Activated T-helper 1 cell treated with anti-CD3 and anti-CD28 coated beads, Interleukin-12 subunit alpha, Interleukin-12 subunit beta, Interleukin-2, Interleukin-4 antibody, amounts not matched to agents 30 ng/mL and 10 ng/mL and 1 ng/mL, durations not matched to agents 14 hours and 24 hours and 36 hours (primary cell): ENCODE measurements at regions of chr7 and their contacts with region 1.

Region 1: DNA sequence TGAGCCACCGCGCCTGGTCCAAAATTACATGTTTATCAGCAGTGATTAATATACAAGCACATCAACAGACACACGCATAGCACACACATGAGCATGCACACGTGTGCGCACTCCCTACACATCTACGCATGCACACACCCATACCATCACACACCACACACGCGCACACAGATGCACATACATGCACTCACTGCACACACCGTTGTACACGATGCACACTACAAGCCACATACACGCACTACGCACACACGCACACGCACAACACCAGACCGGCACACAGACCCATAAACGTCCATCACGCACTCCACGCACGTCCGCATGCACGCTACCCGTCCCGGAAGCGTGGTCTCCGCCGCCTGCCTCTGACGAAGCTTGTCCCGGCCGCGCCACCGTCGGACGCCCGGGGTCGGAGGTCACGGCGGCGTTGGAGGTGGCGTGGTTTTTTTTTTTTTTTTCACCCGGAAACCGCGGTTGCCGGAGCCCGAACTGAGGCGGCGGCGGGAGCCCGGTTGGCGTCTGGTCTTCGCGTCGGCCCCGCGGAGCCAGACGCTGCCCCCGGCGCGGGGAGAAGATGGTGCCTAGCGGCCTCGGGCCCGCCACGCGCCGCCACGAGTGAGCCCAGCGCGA is at the start of gene TMEM248:
- DNase-seq: peak; percentile 90
- H3K4me3 Mint-ChIP-seq: peak within 1 kb of the TSS; percentile 98
- H3K27ac Mint-ChIP-seq: peak within 1 kb of the TSS; percentile 98
- H3K4me1 Mint-ChIP-seq: peaks cover 21% of the 10 kb centered on the region
- H3K27me3 Mint-ChIP-seq: no peaks in the 10 kb centered on the region
- total RNA-seq, gene TMEM248: 83.6 and 95.6 TPM in 2 replicates

Region 2: DNA sequence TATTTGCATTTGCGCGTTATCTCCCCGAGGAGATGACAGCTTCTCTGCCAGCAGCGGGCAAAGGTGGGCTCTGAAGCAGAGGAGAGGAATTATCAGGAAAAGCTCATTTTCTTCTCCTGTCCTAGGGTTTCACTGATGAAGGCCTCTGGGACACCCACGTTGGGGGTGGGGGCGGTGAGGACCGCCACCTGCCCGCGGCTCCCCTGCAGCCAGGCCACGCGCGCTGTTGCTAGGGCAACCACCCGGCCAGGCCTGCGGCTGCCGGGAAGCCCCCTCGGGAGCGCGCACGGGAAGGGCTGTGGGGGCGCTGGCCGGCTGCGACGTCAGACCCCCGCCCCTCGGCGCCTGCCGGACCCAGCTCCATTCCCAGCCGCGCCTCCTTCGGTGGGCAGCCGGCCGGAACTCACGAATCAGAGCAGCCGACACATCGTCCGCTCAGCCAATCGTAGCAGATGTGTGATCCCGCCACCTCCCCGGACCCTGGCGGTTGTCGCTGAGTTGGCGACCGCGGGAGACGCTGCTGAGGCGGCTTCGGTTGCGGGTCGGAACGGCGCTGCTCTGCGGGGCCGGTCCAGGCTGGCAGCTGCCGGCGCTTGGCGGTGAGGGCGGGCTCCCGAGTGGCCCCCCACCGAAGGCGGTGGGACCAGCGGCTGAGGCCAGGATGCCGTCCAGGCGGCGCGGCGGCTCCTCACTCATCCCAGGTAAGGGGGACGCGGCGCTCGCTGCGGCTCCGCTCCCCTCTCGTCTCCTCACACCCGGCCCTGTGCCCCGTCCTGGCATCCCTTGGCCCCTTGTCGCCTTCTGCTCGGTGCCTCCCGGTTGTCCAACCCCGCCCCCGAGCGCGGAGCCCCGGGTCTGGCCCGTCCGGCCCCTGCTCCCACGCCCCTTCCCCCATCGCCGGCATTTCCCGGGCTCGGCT is 715.8 kb before region 1 on chr7 and contains the start of gene TPST1:
- intact Hi-C with region 1: loop called (anchors 10 kb)
- DNase-seq: peak; percentile 77
- H3K4me3 Mint-ChIP-seq: peak within 1 kb of the TSS; percentile 92
- H3K27ac Mint-ChIP-seq: peak within 1 kb of the TSS; percentile 49
- H3K4me1 Mint-ChIP-seq: peaks cover 29% of the 10 kb centered on the region
- H3K27me3 Mint-ChIP-seq: peaks cover 36% of the 10 kb centered on the region
- total RNA-seq, gene TPST1: 1.6 and 1.8 TPM in 2 replicates

Region 3: GRCh38 chr7:66654123-66654732 is 266.7 kb before region 1 on chr7:
- intact Hi-C with region 1: loop called (anchors 1 kb)
- DNase-seq: peak; percentile 98
- H3K4me3 Mint-ChIP-seq: peak overlapping the region; percentile 94
- H3K27ac Mint-ChIP-seq: peak overlapping the region; percentile 94
- H3K4me1 Mint-ChIP-seq: peaks cover 15% of the 10 kb centered on the region
- H3K27me3 Mint-ChIP-seq: no peaks in the 10 kb centered on the region

Region 4: DNA sequence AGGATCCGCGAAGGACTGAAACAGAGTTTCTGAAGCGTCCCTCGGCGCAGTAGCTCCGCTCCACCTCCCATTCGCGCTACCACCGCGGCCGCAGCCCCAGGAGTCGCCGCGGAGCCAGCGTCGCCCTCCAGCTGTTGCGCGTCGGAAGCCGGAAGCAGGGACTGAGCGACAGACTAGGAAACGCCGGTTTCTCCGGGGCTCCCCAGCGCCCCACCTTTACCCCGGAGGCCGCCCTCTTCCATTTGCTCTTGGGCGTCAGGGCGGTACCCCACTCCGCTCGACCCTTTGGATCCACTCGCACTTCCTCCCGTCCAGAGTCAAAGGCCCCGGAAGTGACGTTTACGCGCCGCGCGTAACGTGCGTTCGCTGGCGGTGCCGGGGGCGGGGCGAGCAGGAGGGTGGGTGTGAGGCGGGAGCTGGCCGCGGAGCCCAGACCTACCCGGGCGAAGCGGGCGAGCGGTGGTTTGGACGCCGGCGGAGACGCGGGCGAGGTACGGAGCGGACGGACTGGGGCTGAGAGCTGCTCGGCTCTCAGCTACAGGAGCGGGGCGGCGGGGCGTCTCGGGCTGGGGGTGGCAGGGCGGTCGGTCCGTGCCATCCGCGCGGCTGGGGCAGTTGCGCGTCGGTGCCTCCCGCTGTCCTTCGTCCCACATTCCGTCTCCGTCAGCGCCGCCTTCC is 180.4 kb before region 1 on chr7 and contains the start of gene RABGEF1:
- intact Hi-C with region 1: loop called (anchors 1 kb)
- DNase-seq: peak; percentile 98
- H3K4me3 Mint-ChIP-seq: peak within 1 kb of the TSS; percentile 95
- H3K27ac Mint-ChIP-seq: peak within 1 kb of the TSS; percentile 94
- H3K4me1 Mint-ChIP-seq: peaks cover 15% of the 10 kb centered on the region
- H3K27me3 Mint-ChIP-seq: no peaks in the 10 kb centered on the region
- total RNA-seq, gene RABGEF1: 26.7 and 27.8 TPM in 2 replicates

Region 5: DNA sequence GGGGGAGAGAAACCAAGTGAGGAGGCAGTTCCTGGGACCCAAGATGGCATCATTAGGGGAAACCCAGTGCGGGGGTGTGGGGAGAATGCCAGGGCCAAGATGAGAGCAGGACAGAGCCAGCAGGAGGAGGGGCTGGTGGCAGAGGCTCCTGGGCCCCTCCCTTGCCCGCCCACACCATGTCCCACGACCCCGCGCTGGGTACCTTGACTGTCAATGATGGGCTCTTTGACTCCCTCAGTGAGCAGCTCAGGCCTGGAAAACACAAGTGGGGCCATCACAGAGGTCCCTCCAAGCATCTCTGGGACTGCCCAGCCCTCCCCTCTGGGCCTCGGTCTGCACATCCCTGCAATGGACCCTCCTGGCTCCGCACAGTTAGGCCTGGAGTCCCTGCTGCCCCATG is 104.9 kb before region 1 on chr7:
- intact Hi-C with region 1: no loop called
- DNase-seq: no peak
- H3K4me3 Mint-ChIP-seq: no peak overlapping the region
- H3K27ac Mint-ChIP-seq: no peak overlapping the region
- H3K4me1 Mint-ChIP-seq: no peaks in the 10 kb centered on the region
- H3K27me3 Mint-ChIP-seq: no peaks in the 10 kb centered on the region

Region 6: DNA sequence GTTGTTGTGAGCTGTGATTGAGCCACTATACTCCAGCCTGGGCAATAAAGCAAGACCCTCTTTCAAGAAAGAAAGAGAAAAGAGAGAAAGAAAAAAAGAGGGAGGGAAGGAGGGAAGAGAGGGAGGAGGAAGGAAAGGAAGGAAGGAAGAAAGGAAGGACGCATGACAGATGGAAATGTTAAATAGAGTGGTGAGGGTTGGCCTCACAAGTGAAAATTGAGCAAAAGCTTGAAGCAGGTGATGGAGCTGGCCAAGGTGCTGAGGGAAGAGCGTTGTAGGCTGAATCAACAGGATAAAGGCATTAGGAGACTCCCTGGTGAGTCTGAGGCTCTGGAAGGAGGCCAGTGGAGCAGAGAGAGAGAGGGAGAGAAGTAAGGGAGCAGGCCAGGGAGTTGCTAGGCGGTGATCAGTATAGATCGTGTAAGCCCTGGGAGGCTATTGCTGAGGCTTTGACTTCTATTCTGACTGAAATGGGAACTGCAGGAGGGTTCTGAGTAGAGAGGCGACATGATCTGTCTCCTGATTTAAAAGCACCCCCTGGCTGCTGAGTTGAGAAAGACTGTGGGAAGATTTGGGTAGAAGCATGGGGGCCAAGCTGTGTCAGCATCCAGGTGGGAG is 26.3 kb before region 1 on chr7:
- intact Hi-C with region 1: no loop called
- DNase-seq: no peak
- H3K4me3 Mint-ChIP-seq: no peak overlapping the region
- H3K27ac Mint-ChIP-seq: no peak overlapping the region
- H3K4me1 Mint-ChIP-seq: no peaks in the 10 kb centered on the region
- H3K27me3 Mint-ChIP-seq: peaks cover 2% of the 10 kb centered on the region

Region 7: GRCh38 chr7:66933469-66933868 is 12.6 kb after region 1 on chr7:
- intact Hi-C with region 1: no loop called
- DNase-seq: no peak
- H3K4me3 Mint-ChIP-seq: no peak overlapping the region
- H3K27ac Mint-ChIP-seq: peak overlapping the region; percentile 44
- H3K4me1 Mint-ChIP-seq: peaks cover 52% of the 10 kb centered on the region
- H3K27me3 Mint-ChIP-seq: no peaks in the 10 kb centered on the region

Region 8: DNA sequence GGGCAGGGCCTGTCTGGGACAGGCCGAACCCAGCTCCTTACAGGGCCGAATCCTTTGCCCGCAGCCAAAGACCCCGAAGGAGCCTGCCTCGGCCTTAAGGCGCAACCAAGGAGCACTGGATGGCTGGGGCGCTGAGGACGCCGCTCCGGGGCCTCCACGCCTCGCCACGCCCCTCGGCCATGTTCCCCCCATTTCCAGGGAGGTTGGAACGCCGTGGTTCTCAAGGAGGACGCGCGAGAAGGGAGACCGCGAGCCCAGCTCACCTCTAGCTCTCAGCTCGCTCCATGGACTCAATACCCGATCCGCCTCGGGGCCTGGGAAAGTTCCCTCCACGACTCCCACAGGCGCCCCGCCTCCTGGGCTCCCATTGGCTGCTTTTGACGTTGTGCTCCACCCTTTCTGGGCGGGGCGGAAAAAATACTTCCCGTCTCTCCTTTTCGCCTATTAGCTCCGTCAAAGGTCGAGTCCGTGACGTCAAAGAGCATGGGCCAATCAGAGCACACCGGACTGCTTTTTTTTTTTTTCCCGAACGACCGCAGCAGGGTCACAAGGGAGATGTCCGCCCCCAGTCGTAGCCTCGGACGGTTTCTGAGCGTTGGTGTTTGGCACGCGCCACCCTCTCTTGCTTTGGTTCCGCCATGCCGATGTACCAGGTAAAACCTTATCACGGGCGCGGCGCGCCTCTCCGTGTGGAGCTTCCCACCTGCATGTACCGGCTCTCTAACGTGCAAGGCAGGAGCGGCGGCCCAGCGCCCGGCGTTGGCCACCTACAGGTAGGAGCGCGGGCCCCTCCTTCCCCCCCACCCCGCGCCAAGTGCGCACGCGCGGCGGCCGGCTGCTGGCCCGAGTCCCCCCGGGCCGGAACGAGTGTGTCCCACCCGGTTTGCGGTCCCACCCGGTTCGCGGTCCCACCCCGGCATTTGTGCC is 381.5 kb after region 1 on chr7:
- intact Hi-C with region 1: loop called (anchors 10 kb)
- DNase-seq: peak; percentile 97
- H3K4me3 Mint-ChIP-seq: peak overlapping the region; percentile 88
- H3K27ac Mint-ChIP-seq: peak overlapping the region; percentile 91
- H3K4me1 Mint-ChIP-seq: peaks cover 21% of the 10 kb centered on the region
- H3K27me3 Mint-ChIP-seq: peaks cover 4% of the 10 kb centered on the region

Region 9: DNA sequence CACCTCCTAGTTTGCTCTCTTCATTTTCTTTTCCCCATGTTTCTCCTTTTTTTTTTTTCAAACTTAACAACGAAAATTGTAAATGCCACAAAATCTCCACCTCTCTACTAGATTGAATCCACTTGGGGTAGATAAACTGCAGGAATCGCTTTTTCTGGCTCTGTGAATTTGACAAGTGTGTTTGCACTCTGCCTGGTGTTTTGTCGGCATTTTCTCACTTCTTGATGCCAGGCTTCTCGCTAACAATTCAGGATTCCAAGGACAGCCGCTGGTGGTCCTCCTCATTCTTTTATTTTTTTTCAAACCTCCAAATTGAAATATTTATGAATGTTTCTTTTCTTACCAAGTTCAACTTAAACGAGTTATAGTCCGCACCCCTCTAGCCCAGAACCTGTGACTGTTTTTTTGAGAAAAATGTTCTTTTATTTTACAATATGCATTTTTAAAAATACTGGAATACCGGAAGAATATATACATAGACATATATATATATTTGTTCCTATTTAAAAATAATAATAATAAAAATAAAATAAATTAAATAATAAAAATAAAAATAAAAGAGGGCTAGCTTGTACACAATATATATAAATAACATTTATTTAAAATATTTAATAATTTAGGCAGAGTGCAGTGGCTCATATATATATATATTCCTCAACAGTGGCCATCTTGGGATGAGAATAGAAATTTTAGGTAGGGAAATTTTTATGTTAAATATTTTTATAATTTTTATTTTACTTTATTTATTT is 614.5 kb after region 1 on chr7:
- intact Hi-C with region 1: no loop called
- DNase-seq: no peak
- H3K4me3 Mint-ChIP-seq: no peak overlapping the region
- H3K27ac Mint-ChIP-seq: no peak overlapping the region
- H3K4me1 Mint-ChIP-seq: no peaks in the 10 kb centered on the region
- H3K27me3 Mint-ChIP-seq: no peaks in the 10 kb centered on the region